Sciatic nerve (tissue), 2 donors: ENCODE measurements at regions of chr14 and their contacts with region 1.

Region 1: GRCh38 chr14:100375963-100376735 is 53.0 kb downstream of the SLC25A47 start:
- DNase-seq: peak; percentile 96
- ATAC-seq: peak; percentile 96

Region 2: GRCh38 chr14:100285021-100285912 is 90.9 kb before region 1 on chr14:
- intact Hi-C with region 1: loop called (anchors 5 kb)
- DNase-seq: peak; percentile 84
- ATAC-seq: peak; percentile 82

Region 3: DNA sequence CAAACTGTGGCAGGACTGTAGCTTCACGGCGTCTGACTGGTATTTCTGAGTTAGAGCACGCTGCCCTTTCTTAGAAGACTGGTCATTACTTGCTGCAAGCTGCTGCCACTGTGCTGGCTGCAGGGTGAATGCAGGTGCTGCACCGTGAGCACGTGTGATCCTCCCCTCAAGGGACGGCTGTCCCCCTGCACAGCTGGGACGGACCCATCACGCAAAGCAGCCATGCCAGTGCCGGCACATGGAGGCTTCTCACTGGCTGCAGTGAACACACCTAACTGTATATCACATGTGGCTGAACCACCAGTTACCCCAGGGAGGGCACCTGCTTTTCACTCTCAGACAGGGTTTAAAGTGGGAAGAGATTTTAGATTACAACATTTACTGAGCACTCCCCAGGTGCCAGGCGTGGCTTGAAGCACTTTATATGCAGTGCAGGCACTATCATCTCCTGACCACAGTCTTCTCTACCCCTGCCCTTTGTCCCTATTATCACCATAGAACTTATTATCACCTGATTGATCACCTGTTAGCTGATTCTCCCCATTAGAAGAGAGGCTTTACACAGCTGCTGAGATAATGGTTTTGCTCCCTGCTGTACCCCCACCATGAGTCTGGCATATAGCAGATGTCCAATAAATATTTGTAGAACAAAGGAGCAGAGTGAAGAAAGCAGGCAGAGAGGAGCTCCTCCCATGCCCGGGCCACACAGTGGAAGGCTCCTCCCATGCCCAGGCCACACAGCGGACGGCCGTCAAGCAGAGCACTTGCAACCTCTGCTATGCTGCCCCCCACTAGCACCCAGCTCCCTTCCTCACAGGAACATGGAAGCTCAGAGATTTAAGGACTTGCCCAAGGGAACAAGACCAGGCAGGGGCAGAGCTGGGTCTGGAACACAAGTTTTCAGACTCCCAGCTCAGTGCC is 27.1 kb before region 1 on chr14:
- intact Hi-C with region 1: no loop called
- DNase-seq: no peak
- ATAC-seq: no peak